CD14-positive monocyte (primary cell): ENCODE measurements at regions of chr1 and their contacts with region 1.

Region 1: DNA sequence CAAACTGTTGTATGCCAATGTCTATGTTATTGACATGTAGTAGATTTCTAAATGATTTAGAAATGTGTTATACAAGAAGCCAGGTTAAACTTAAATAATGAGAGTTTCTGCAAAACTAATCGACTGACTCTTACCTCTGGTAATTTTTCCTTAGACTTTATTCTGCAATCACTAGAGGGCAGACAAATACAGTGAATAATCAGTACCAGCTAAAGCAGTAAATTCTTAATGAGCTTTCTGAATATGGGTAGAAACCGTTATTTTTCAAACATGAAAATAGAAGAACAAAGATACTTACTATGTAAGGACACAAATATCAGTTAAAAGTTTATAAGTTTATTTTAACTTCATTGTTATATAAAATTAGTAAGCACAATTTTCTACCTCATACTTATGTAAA is 97.9 kb upstream of the RGS1 start:
- DNase-seq: peak in 2 of 3 donors; percentile 20 to 43
- H3K4me3 ChIP-seq: no peak overlapping the region
- H3K4me3 Mint-ChIP-seq: no peak overlapping the region
- H3K27ac ChIP-seq: no peak overlapping the region
- H3K27ac Mint-ChIP-seq: no peak overlapping the region
- H3K4me1 ChIP-seq: no peaks in the 10 kb centered on the region
- H3K4me1 Mint-ChIP-seq: peaks cover 5% of the 10 kb centered on the region
- H3K27me3 ChIP-seq: no peaks in the 10 kb centered on the region
- H3K27me3 Mint-ChIP-seq: peaks cover 0 to 5% (median 3%) of the 10 kb centered on the region in 3 donors
- CTCF ChIP-seq: peak; percentile 63

Region 2: GRCh38 chr1:192793983-192794767 is 316.5 kb after region 1 on chr1:
- intact Hi-C with region 1: loop called in 1 of 2 experiments (anchors 10 kb)
- DNase-seq: no peak
- H3K4me3 ChIP-seq: no peak overlapping the region
- H3K4me3 Mint-ChIP-seq: no peak overlapping the region
- H3K27ac ChIP-seq: no peak overlapping the region
- H3K27ac Mint-ChIP-seq: no peak overlapping the region
- H3K4me1 ChIP-seq: peaks cover 7% of the 10 kb centered on the region in 2 donors
- H3K4me1 Mint-ChIP-seq: peaks cover 10% of the 10 kb centered on the region
- H3K27me3 ChIP-seq: no peaks in the 10 kb centered on the region
- H3K27me3 Mint-ChIP-seq: no peaks in the 10 kb centered on the region
- CTCF ChIP-seq: no peak